Right cardiac atrium (tissue), 5 donors: ENCODE measurements at regions of chr17 and their contacts with region 1.

Region 1: DNA sequence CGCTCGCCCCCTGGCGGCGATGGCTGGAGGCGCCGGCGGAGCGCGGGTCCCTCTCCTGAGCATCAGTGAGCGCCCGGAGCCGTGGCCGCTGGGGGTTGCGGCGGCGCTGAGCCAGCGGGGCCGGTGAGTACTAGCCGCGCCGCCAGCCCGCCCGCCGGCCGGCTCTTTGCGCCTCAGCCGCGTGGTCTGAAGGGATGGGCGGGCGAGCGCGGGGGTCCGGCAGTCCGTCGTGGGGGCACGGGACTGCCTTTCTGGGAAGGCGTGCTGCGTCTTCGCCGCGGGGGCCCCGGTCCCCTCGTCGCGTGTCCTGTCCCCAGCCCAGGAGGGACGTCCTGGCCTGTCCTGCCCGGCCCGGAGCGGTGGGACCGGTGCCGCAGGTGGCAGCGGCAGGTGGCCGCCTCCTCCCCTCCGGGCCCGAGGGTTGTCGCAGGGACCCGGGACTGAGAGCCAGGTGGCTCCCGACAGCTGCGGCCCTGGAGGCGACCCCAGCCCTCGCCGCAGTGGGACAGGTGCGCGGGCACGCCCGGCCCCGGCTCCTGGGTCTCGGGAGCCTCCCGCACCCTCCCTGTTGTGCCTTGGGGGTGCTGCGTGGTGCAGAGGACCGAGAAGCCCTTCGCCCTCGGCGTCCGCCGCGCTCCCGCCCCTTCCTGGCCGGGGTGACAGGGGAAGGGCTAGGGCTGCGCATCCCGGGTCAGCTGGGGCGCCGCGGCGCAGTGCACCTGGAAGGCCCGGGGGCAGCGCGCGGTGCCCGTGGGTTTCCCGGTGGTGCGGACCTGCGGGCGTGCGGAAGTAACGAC is at the start of gene SPECC1:
- DNase-seq: peak; percentile 74 to 94 (median 93)
- ATAC-seq: peak; percentile 97 to 99
- H3K4me3 ChIP-seq: peak within 1 kb of the TSS; percentile 53
- H3K27ac ChIP-seq: no peak within 1 kb of the TSS
- H3K4me1 ChIP-seq: no peaks in the 10 kb centered on the region
- H3K27me3 ChIP-seq: no peaks in the 10 kb centered on the region
- total RNA-seq, gene SPECC1: 7.8 to 9.7 (median 8.5) TPM

Region 2: DNA sequence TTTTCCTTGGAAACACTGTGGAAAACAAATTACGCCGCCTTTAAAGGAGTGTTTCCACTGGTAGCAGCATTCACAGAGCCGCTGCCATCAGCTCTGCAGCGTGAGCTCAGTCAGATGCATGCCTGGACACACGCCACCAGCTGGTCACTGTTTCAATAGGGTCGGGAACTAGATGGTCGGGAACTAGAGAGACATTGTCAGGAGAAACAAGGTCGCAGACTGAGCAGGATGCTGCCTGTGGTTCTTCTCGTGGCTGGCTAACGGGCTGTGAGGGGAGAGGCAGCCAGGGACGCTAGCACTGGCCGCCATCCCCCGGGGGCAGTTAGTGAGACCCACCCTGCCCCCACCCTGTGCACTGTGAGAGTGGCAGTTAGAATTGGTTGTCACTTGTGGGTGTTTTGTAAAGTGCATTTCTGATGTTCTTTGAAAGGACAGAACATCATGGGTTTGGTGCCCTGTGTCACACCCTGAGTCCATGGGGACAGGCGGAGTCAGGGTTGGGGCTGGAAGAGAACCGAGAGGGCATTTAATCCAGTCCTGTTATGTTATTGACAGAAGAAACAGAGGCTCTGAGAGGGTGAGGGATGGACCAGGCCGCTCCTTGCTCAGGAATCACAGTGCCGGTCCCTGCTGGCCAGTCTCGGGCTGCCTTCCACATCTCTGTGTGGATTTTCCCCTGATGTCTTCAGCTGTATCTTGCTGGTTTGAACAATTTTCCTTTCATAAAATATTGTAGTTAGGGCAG is 86.0 kb after region 1 on chr17:
- intact Hi-C with region 1: loop called in 2 of 4 experiments (anchors 5 to 10 kb)
- DNase-seq: peak; percentile 76 to 93 (median 89)
- ATAC-seq: peak; percentile 78 to 79
- H3K4me3 ChIP-seq: no peak overlapping the region
- H3K27ac ChIP-seq: peak overlapping the region; percentile 63
- H3K4me1 ChIP-seq: peaks cover 5% of the 10 kb centered on the region
- H3K27me3 ChIP-seq: no peaks in the 10 kb centered on the region

Region 3: DNA sequence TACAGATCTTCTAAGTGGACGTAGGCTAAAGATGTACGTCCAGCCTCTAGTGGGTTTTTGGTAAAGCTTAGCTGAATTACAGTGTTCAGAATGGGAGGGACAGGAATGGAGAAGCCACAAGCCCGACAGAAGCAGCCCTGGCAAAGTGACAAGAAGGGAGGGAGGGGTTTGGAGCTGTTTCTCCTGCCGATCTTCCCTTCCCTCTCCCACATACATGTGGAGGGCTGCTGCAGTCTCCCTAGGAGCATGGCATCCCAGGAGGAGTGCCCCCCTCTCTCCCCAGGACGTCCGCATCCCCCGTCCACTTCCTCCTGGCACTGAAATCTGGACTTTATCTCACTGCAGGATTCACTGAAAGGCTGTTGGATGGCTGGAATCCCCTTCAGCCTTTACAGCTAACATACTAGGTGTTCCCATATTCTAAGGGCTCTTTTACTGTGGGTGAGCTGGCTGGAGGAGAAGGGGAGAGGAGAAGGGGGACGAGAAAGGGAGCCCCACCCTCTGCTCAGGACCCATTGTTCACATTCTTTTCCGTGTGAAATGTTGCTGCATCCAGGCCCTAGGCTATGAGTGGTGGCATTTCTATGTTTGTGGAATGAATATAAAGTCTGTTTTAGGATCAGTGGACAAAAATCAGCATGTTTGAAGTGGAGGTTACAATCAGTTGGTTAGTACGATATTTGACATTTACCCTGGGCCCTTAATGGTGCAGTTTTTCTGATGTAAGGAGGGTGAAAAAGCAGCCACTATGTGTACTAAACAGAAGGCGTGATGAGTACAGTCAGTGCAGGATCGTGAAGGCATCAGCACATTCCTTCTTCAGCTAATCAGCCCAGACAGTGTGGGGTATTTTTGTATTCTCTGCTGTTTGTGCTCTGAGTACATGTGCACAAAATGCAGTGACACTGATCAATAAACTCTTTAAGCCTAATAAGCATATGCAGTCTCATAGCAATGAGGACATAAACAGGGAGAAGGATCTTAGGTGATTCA is 94.2 kb after region 1 on chr17:
- intact Hi-C with region 1: loop called in 2 of 4 experiments (anchors 5 to 10 kb)
- DNase-seq: peak in 1 of 3 donors; percentile 59
- ATAC-seq: peak; percentile 24 to 51
- H3K4me3 ChIP-seq: no peak overlapping the region
- H3K27ac ChIP-seq: no peak overlapping the region
- H3K4me1 ChIP-seq: no peaks in the 10 kb centered on the region
- H3K27me3 ChIP-seq: no peaks in the 10 kb centered on the region

Region 4: GRCh38 chr17:20114466-20114865 is 105.0 kb after region 1 on chr17:
- intact Hi-C with region 1: loop called in 1 of 4 experiments (anchors 5 kb)
- DNase-seq: no peak
- ATAC-seq: no peak
- H3K4me3 ChIP-seq: no peak overlapping the region
- H3K27ac ChIP-seq: no peak overlapping the region
- H3K4me1 ChIP-seq: no peaks in the 10 kb centered on the region
- H3K27me3 ChIP-seq: no peaks in the 10 kb centered on the region